AG04450 (cell line): ENCODE measurements at regions of chr11 and their contacts with region 1.

Region 1: GRCh38 chr11:43311791-43312607 is at the start of gene API5:
- DNase-seq: peak; percentile 81
- H3K4me3 ChIP-seq: peak within 1 kb of the TSS; percentile 97
- H3K27ac ChIP-seq: peak within 1 kb of the TSS; percentile 78
- H3K27me3 ChIP-seq: no peaks in the 10 kb centered on the region
- CTCF ChIP-seq: peak; percentile 87
- polyA plus RNA-seq, gene API5: 66.7 and 89.5 TPM in 2 replicates

Region 2: DNA sequence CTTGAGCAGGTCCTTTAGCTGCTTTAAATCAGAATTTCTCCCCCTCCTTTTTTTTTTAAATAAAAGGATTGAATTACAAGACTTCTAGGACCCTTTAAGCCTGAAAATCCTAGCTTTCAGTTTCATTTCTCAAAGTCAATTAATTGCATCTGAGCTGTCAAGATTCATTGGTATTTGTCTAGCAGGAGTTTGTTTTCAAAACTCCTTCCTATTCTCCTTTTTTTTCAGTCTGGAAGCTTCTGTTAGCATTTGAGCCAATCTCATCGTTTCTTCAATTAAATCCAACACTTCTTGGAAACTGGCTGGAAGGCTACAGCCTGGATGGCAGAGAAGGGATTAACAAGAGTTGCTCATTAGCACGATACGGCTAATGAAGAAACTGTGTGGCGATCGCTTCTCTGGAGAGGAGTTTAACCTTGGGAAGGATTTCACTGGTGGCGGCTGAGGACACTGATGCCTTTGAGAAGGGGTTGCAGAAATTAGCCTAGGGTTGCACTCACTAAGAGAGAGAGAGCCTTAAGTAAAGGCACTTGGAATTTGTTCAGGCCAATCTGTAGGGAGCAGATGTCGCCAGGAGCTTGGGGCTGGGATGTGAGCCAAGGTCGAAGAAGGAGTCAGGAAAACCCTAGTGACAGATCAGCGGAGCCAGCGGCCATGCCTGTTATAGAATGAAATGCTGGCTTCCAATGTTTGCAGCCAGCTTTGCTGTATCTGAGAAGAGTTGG is 44.0 kb before region 1 on chr11:
- CTCF ChIA-PET with region 1: no interaction called
- POLR2A ChIA-PET with region 1: no interaction called
- DNase-seq: no peak
- H3K4me3 ChIP-seq: no peak overlapping the region
- H3K27ac ChIP-seq: peak overlapping the region; percentile 0
- H3K27me3 ChIP-seq: no peaks in the 10 kb centered on the region
- CTCF ChIP-seq: no peak

Region 3: GRCh38 chr11:43298397-43298796 is 13.6 kb before region 1 on chr11:
- CTCF ChIA-PET with region 1: interaction called, 26 read pairs
- POLR2A ChIA-PET with region 1: no interaction called
- DNase-seq: no peak
- H3K4me3 ChIP-seq: no peak overlapping the region
- H3K27ac ChIP-seq: no peak overlapping the region
- H3K27me3 ChIP-seq: no peaks in the 10 kb centered on the region
- CTCF ChIP-seq: no peak

Region 4: GRCh38 chr11:43327987-43328386 is 16.0 kb after region 1 on chr11:
- CTCF ChIA-PET with region 1: interaction called, 29 read pairs
- POLR2A ChIA-PET with region 1: no interaction called
- DNase-seq: peak; percentile 89
- H3K4me3 ChIP-seq: no peak overlapping the region
- H3K27ac ChIP-seq: no peak overlapping the region
- H3K27me3 ChIP-seq: no peaks in the 10 kb centered on the region
- CTCF ChIP-seq: no peak

Region 5: DNA sequence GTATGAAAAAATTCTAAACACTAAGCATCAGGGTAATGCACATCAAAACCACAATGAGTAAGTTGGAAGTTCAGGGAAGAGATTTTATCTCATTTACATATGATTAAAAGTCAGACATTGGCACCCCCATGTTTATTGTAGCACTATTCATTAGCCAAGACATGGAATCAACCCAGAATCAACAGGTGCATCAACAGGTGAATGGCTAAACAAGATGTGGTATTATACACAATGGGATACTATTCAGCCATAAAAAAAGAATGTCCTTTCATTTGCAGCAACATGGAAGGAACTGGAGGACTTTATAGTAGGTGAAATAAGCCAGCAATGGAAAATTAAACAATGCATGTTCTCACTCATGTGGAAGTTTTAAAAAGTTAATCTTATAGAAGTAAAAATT is 29.2 kb after region 1 on chr11:
- CTCF ChIA-PET with region 1: interaction called, 12 read pairs
- POLR2A ChIA-PET with region 1: no interaction called
- DNase-seq: no peak
- H3K4me3 ChIP-seq: no peak overlapping the region
- H3K27ac ChIP-seq: no peak overlapping the region
- H3K27me3 ChIP-seq: no peaks in the 10 kb centered on the region
- CTCF ChIP-seq: no peak